A673 (cell line): ENCODE measurements at regions of chrX and their contacts with region 1.

Region 1: DNA sequence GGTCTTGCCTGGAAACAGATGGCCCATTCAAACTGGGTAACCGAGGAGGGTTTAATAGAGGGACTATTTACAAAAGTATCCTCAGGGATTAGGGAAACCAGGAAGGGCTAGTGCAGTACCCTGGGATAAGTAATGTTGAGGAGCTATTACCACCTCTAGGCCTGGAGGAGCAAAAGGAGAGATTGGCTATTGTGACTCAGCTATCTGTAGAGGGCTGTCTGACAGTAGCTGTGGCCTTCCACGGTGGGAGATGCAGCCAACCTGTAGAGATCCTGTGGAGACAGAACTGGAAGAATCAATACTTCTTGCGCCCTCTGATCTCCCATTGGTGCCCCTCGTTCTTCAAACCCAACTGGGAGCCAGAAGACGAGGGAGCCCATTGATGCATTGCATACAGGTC is 34.1 kb upstream of the RPS6KA3 start:
- DNase-seq: no peak
- H3K4me3 ChIP-seq: no peak overlapping the region
- H3K27ac ChIP-seq: no peak overlapping the region
- H3K4me1 ChIP-seq: no peaks in the 10 kb centered on the region
- H3K27me3 ChIP-seq: no peaks in the 10 kb centered on the region
- CTCF ChIP-seq: no peak

Region 2: DNA sequence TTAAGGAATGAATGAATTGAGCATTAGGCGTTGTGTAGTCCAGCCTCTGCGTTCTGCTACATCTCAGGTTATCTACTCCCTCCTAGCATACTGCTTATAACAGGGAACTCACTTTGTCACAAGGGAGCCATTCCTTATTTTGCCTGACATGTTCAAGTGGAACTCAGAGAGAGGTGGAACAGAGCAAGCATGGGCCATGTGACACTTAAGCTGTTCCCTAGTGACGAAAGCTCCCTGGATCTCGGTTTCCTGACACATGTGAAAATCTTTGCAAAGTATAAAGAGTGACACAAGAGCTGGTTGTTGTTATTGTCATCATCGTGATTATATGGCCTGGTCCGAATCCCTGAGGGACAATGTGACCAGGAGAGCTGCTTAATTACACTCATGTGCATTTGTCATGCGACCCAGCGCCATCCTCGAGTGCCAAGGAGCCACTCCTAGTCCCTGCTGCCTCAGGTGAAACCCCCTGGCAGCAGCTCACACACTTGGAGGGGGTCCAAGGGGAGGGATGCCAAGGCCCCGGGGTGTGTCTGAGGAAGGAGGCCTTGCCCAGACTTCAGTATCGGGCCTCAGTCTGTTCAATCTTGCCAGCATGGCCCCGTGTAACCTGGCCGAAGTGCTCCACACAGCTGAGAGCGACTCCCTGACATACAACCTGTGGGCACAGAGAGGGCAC is 687.0 kb before region 1 on chrX:
- CTCF ChIA-PET with region 1: no interaction called
- POLR2A ChIA-PET with region 1: no interaction called
- intact Hi-C with region 1: no loop called
- DNase-seq: no peak
- H3K4me3 ChIP-seq: no peak overlapping the region
- H3K27ac ChIP-seq: no peak overlapping the region
- H3K4me1 ChIP-seq: no peaks in the 10 kb centered on the region
- H3K27me3 ChIP-seq: no peaks in the 10 kb centered on the region
- CTCF ChIP-seq: no peak

Region 3: GRCh38 chrX:20181598-20182329 is 119.1 kb before region 1 on chrX:
- CTCF ChIA-PET with region 1: no interaction called
- POLR2A ChIA-PET with region 1: interaction called, 21 read pairs
- intact Hi-C with region 1: no loop called
- DNase-seq: no peak
- H3K4me3 ChIP-seq: no peak overlapping the region
- H3K27ac ChIP-seq: no peak overlapping the region
- H3K4me1 ChIP-seq: no peaks in the 10 kb centered on the region
- H3K27me3 ChIP-seq: peaks cover 7% of the 10 kb centered on the region
- CTCF ChIP-seq: no peak